ENCODE measurements at regions of chr19 and their contacts with region 1.

Region 1: GRCh38 chr19:45340232-45340898 is at the start of gene KLC3:
- DNase-seq: peak in 1 of 2 donors; percentile 66
- ATAC-seq: peak in 1 of 3 donors; percentile 23
- H3K4me3 ChIP-seq: no peak within 1 kb of the TSS
- H3K4me3 Mint-ChIP-seq: peak within 1 kb of the TSS; percentile 77
- H3K27ac ChIP-seq: no peak within 1 kb of the TSS
- H3K27ac Mint-ChIP-seq: no peak within 1 kb of the TSS
- H3K4me1 ChIP-seq: peaks cover 10% of the 10 kb centered on the region
- H3K4me1 Mint-ChIP-seq: peaks cover 10 to 12% of the 10 kb centered on the region in 2 donors
- H3K27me3 ChIP-seq: peaks cover 9% of the 10 kb centered on the region
- H3K27me3 Mint-ChIP-seq: peaks cover 8 to 18% of the 10 kb centered on the region in 2 donors
- CTCF ChIP-seq: no peak
- total RNA-seq, gene KLC3: not detected

Region 2: GRCh38 chr19:44782729-44783128 is 557.6 kb before region 1 on chr19:
- intact Hi-C with region 1: loop called (anchors 5 kb)
- DNase-seq: no peak
- ATAC-seq: no peak
- H3K4me3 ChIP-seq: no peak overlapping the region
- H3K4me3 Mint-ChIP-seq: no peak overlapping the region
- H3K27ac ChIP-seq: no peak overlapping the region
- H3K27ac Mint-ChIP-seq: no peak overlapping the region
- H3K4me1 ChIP-seq: peaks cover 6% of the 10 kb centered on the region
- H3K4me1 Mint-ChIP-seq: peaks cover 0 to 6% of the 10 kb centered on the region in 2 donors
- H3K27me3 ChIP-seq: no peaks in the 10 kb centered on the region
- H3K27me3 Mint-ChIP-seq: peaks cover 6 to 10% of the 10 kb centered on the region in 2 donors
- CTCF ChIP-seq: no peak

Region 3: GRCh38 chr19:44800461-44800860 is 539.9 kb before region 1 on chr19:
- intact Hi-C with region 1: loop called (anchors 5 kb)
- DNase-seq: peak; percentile 83 to 87
- ATAC-seq: peak; percentile 93 to 99 (median 99)
- H3K4me3 ChIP-seq: no peak overlapping the region
- H3K4me3 Mint-ChIP-seq: no peak overlapping the region
- H3K27ac ChIP-seq: no peak overlapping the region
- H3K27ac Mint-ChIP-seq: no peak overlapping the region
- H3K4me1 ChIP-seq: peaks cover 5% of the 10 kb centered on the region
- H3K4me1 Mint-ChIP-seq: no peaks in the 10 kb centered on the region
- H3K27me3 ChIP-seq: no peaks in the 10 kb centered on the region
- H3K27me3 Mint-ChIP-seq: peaks cover 0 to 2% of the 10 kb centered on the region in 2 donors
- CTCF ChIP-seq: peak; percentile 73

Region 4: GRCh38 chr19:44903602-44904425 is 436.6 kb before region 1 on chr19:
- intact Hi-C with region 1: loop called (anchors 5 kb)
- DNase-seq: peak; percentile 79
- ATAC-seq: peak; percentile 73 to 92 (median 80)
- H3K4me3 ChIP-seq: no peak overlapping the region
- H3K4me3 Mint-ChIP-seq: no peak overlapping the region
- H3K27ac ChIP-seq: no peak overlapping the region
- H3K27ac Mint-ChIP-seq: no peak overlapping the region
- H3K4me1 ChIP-seq: peaks cover 4% of the 10 kb centered on the region
- H3K4me1 Mint-ChIP-seq: peaks cover 6 to 8% of the 10 kb centered on the region in 2 donors
- H3K27me3 ChIP-seq: peaks cover 12% of the 10 kb centered on the region
- H3K27me3 Mint-ChIP-seq: peaks cover 18 to 22% of the 10 kb centered on the region in 2 donors
- CTCF ChIP-seq: peak; percentile 98

Region 5: GRCh38 chr19:44988896-44989556 is 351.3 kb before region 1 on chr19:
- intact Hi-C with region 1: loop called (anchors 1 kb)
- DNase-seq: peak; percentile 48 to 82
- ATAC-seq: peak; percentile 70 to 89 (median 71)
- H3K4me3 ChIP-seq: no peak overlapping the region
- H3K4me3 Mint-ChIP-seq: no peak overlapping the region
- H3K27ac ChIP-seq: no peak overlapping the region
- H3K27ac Mint-ChIP-seq: peak overlapping the region in 1 of 2 donors; percentile 13
- H3K4me1 ChIP-seq: peaks cover 32% of the 10 kb centered on the region
- H3K4me1 Mint-ChIP-seq: peaks cover 9 to 27% of the 10 kb centered on the region in 2 donors
- H3K27me3 ChIP-seq: no peaks in the 10 kb centered on the region
- H3K27me3 Mint-ChIP-seq: no peaks in the 10 kb centered on the region
- CTCF ChIP-seq: peak; percentile 57

Region 6: GRCh38 chr19:45200568-45200994 is 139.8 kb before region 1 on chr19:
- intact Hi-C with region 1: loop called (anchors 1 kb)
- DNase-seq: no peak
- ATAC-seq: no peak
- H3K4me3 ChIP-seq: no peak overlapping the region
- H3K4me3 Mint-ChIP-seq: no peak overlapping the region
- H3K27ac ChIP-seq: no peak overlapping the region
- H3K27ac Mint-ChIP-seq: no peak overlapping the region
- H3K4me1 ChIP-seq: no peaks in the 10 kb centered on the region
- H3K4me1 Mint-ChIP-seq: no peaks in the 10 kb centered on the region
- H3K27me3 ChIP-seq: no peaks in the 10 kb centered on the region
- H3K27me3 Mint-ChIP-seq: no peaks in the 10 kb centered on the region
- CTCF ChIP-seq: no peak